Dorsolateral prefrontal cortex (tissue), 120 donors: ENCODE measurements at regions of chr9 and their contacts with region 1.

Region 1: DNA sequence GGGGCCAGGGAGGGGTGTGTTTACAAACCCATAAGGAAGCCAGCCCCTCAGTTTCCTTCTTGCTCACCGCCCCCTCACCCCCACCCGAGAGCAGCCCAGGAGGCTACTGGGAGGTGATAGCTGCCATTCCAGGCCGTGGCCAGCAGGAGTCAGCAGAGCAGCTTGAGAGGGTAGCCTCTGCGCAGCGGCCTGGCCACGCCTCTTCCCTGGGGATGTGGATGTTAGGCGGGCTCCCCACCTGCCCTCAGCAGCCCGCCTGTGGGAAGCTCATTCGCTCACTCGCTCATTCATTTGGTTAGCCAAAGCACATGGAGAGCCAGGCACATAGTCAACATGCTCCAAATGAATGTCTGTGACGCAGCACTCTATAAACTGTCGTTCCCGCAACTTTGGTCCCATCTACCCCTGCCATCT is 6.1 kb upstream of the DPM2 start:
- DNase-seq: peak; percentile 78 to 96 (median 92)
- H3K4me3 ChIP-seq: peak overlapping the region in 13 of 59 donors; percentile 3 to 68 (median 9)
- H3K27ac ChIP-seq: peak overlapping the region in 58 of 59 donors; percentile 13 to 100 (median 84)
- H3K27me3 ChIP-seq: no peaks in the 10 kb centered on the region
- CTCF ChIP-seq: peak; percentile 65 to 99 (median 95)

Region 2: GRCh38 chr9:127568971-127569885 is 374.5 kb before region 1 on chr9:
- intact Hi-C with region 1: no loop called
- DNase-seq: peak in 2 of 10 donors; percentile 56 to 79
- H3K4me3 ChIP-seq: peak overlapping the region; percentile 45 to 87 (median 67)
- H3K27ac ChIP-seq: peak overlapping the region in 51 of 59 donors; percentile 8 to 89 (median 67)
- H3K27me3 ChIP-seq: no peaks in the 10 kb centered on the region
- CTCF ChIP-seq: no peak

Region 3: GRCh38 chr9:127980706-127981558 is 37.2 kb after region 1 on chr9 and contains the start of gene EEIG1:
- intact Hi-C with region 1: loop called (anchors 2 to 5 kb)
- DNase-seq: peak; percentile 89 to 99 (median 96)
- H3K4me3 ChIP-seq: peak within 1 kb of the TSS; percentile 69 to 99 (median 90)
- H3K27ac ChIP-seq: peak within 1 kb of the TSS; percentile 64 to 100 (median 97)
- H3K27me3 ChIP-seq: no peaks in the 10 kb centered on the region
- CTCF ChIP-seq: peak in 7 of 56 donors; percentile 2 to 38 (median 26)
- total RNA-seq, gene EEIG1: 73.1 to 300 (median 141) TPM

Region 4: GRCh38 chr9:128034821-128035764 is 91.4 kb after region 1 on chr9:
- intact Hi-C with region 1: loop called (anchors 1 to 2 kb)
- DNase-seq: peak in 9 of 10 donors; percentile 46 to 66 (median 61)
- H3K4me3 ChIP-seq: no peak overlapping the region
- H3K27ac ChIP-seq: peak overlapping the region in 13 of 59 donors; percentile 16 to 73 (median 44)
- H3K27me3 ChIP-seq: no peaks in the 10 kb centered on the region
- CTCF ChIP-seq: peak; percentile 69 to 97 (median 89)

Region 5: GRCh38 chr9:128094166-128094967 is 150.6 kb after region 1 on chr9:
- intact Hi-C with region 1: loop called in 1 of 2 experiments (anchors 10 kb)
- DNase-seq: peak; percentile 49 to 95 (median 88)
- H3K4me3 ChIP-seq: peak overlapping the region; percentile 2 to 77 (median 63)
- H3K27ac ChIP-seq: peak overlapping the region; percentile 7 to 94 (median 82)
- H3K27me3 ChIP-seq: no peaks in the 10 kb centered on the region
- CTCF ChIP-seq: peak in 1 of 56 donors; percentile 19

Region 6: GRCh38 chr9:128117613-128118471 is 174.1 kb after region 1 on chr9:
- intact Hi-C with region 1: loop called in 1 of 2 experiments (anchors 2 kb)
- DNase-seq: peak; percentile 89 to 97 (median 92)
- H3K4me3 ChIP-seq: peak overlapping the region in 6 of 59 donors; percentile 5 to 31 (median 24)
- H3K27ac ChIP-seq: peak overlapping the region in 4 of 59 donors; percentile 16 to 44 (median 27)
- H3K27me3 ChIP-seq: no peaks in the 10 kb centered on the region
- CTCF ChIP-seq: peak; percentile 95 to 100 (median 100)